Activated CD8-positive, alpha-beta T cell treated with anti-CD3 and anti-CD28 coated beads, Interleukin-2, amount 10 ng/mL, durations not matched to agents 7 days and 5 days (primary cell): ENCODE measurements at regions of chr3 and their contacts with region 1.

Region 1: GRCh38 chr3:58349792-58350626 is 17.3 kb downstream of the PXK start:
- DNase-seq: peak; percentile 45
- ATAC-seq: no peak
- H3K4me3 Mint-ChIP-seq: peak overlapping the region; percentile 10
- H3K27ac Mint-ChIP-seq: peak overlapping the region; percentile 83
- H3K4me1 Mint-ChIP-seq: peaks cover 81% of the 10 kb centered on the region
- H3K27me3 Mint-ChIP-seq: no peaks in the 10 kb centered on the region

Region 2: DNA sequence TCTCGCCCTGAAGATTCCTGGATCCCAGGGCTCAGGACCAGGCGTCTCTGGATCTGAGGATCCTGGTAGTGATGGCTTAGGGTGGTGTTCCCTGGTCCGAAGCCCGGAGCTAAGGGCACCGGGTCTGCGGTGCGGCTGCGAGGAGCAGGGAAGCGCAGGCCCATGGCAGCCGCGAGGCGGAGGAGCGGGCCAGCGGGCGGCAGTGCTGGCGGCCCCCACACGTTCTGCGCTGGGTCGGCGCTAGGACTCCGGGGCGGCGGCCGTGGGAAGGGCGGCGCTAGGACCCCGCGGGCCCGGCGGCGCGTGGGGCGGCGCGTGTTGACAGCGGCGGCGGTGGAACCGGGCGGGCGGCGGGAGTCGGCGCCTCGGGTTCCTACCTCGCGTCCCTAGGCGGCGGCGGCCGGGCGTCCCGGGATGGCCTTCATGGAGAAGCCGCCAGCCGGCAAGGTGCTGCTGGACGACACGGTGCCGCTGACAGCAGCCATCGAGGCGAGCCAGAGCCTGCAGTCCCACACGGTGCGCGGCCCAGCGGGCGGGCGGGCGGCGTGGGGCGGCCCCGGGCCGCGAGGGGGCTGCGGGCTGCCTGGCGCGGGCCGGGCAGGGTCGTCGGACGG is 17.3 kb before region 1 on chr3 and contains the start of gene PXK:
- CTCF ChIA-PET with region 1: interaction called, 47 read pairs
- POLR2A ChIA-PET with region 1: interaction called, 42 read pairs
- DNase-seq: peak; percentile 84
- ATAC-seq: peak; percentile 94
- H3K4me3 Mint-ChIP-seq: peak within 1 kb of the TSS; percentile 100
- H3K27ac Mint-ChIP-seq: peak within 1 kb of the TSS; percentile 94
- H3K4me1 Mint-ChIP-seq: peaks cover 41% of the 10 kb centered on the region
- H3K27me3 Mint-ChIP-seq: no peaks in the 10 kb centered on the region
- total RNA-seq, gene PXK: 31.5 to 33.4 TPM